ENCODE measurements at regions of chr11 and their contacts with region 1.

Region 1: GRCh38 chr11:45815449-45816146 is 10.6 kb downstream of the SLC35C1 start:
- DNase-seq: peak; percentile 24
- H3K4me3 Mint-ChIP-seq: no peak overlapping the region
- H3K27ac Mint-ChIP-seq: peak overlapping the region; percentile 72
- H3K4me1 Mint-ChIP-seq: peaks cover 5% of the 10 kb centered on the region
- H3K27me3 Mint-ChIP-seq: no peaks in the 10 kb centered on the region
- CTCF ChIP-seq: peak; percentile 4

Region 2: GRCh38 chr11:45804761-45805304 is 10.8 kb before region 1 on chr11 and contains the start of gene SLC35C1:
- CTCF ChIA-PET with region 1: no interaction called
- POLR2A ChIA-PET with region 1: interaction called, 20 read pairs
- intact Hi-C with region 1: no loop called
- DNase-seq: peak; percentile 95
- H3K4me3 Mint-ChIP-seq: peak within 1 kb of the TSS; percentile 97
- H3K27ac Mint-ChIP-seq: peak within 1 kb of the TSS; percentile 88
- H3K4me1 Mint-ChIP-seq: peaks cover 27% of the 10 kb centered on the region
- H3K27me3 Mint-ChIP-seq: no peaks in the 10 kb centered on the region
- CTCF ChIP-seq: no peak
- total RNA-seq, gene SLC35C1: 11.9 and 14.4 TPM in 2 replicates